ENCODE measurements at regions of chr16 and their contacts with region 1.

Region 1: DNA sequence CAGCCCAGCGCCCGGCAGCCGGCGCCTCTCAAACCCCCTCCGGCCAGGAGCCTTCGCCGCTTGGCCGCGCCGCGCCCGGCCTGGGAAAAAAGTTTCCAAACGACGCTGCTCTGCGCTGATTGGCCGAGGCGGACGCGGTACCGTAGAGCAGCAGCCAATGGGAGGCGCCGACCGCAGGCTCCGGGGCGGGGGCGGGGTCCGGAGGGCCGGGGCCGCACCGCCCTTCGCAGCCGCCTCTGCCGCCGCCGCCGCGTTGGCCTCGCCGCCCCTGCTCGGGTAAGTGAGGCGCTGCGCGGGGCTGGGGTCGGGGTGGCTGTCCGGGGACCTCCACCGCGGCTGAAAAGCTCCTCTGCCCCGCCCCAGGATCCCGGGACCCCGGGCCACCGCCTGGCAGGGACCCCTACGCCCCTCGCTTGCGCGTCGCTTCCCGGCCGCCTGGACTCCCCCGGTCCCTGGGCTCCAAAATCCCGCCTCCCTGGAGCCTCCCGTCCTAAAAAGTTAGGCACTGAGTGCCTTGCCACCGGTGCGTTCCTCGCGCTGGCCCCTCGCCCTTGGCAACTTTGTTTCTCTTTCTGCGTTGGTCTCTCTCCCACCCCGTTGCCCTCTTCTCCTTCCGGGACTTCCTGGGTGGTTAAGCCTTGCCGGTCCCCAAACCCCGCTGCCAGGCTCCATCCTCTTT is at the start of gene NDE1:
- DNase-seq: peak; percentile 94 to 96 (median 95)
- ATAC-seq: peak; percentile 95 to 99 (median 98)
- H3K4me3 ChIP-seq: peak within 1 kb of the TSS; percentile 58 to 100 (median 94)
- H3K27ac ChIP-seq: peak within 1 kb of the TSS; percentile 86 to 99 (median 94)
- H3K4me1 ChIP-seq: peaks cover 0 to 42% (median 24%) of the 10 kb centered on the region in 12 donors
- H3K27me3 ChIP-seq: no peaks in the 10 kb centered on the region
- CTCF ChIP-seq: peak in 3 of 12 donors; percentile 6 to 17 (median 9)
- POLR2A ChIP-seq: peak in 1 of 2 donors; percentile 74
- total RNA-seq, gene NDE1: 13.6 to 32.3 (median 20.4) TPM

Region 2: GRCh38 chr16:15672514-15673167 is 22.5 kb after region 1 on chr16:
- intact Hi-C with region 1: loop called in 2 of 10 experiments (anchors 2 kb)
- DNase-seq: peak; percentile 89 to 93 (median 90)
- ATAC-seq: peak; percentile 94 to 98 (median 98)
- H3K4me3 ChIP-seq: peak overlapping the region in 9 of 12 donors; percentile 4 to 41 (median 28)
- H3K27ac ChIP-seq: peak overlapping the region; percentile 72 to 97 (median 88)
- H3K4me1 ChIP-seq: peaks cover 0 to 38% (median 18%) of the 10 kb centered on the region in 12 donors
- H3K27me3 ChIP-seq: no peaks in the 10 kb centered on the region
- CTCF ChIP-seq: no peak
- POLR2A ChIP-seq: peak in 1 of 2 donors; percentile 53

Region 3: GRCh38 chr16:15704545-15704987 is 54.4 kb after region 1 on chr16:
- intact Hi-C with region 1: loop called in 2 of 10 experiments (anchors 2 to 10 kb)
- DNase-seq: peak; percentile 71 to 81 (median 73)
- ATAC-seq: peak; percentile 50 to 90 (median 82)
- H3K4me3 ChIP-seq: no peak overlapping the region
- H3K27ac ChIP-seq: peak overlapping the region in 1 of 12 donors; percentile 38
- H3K4me1 ChIP-seq: peaks cover 0 to 4% (median 0%) of the 10 kb centered on the region in 12 donors
- H3K27me3 ChIP-seq: no peaks in the 10 kb centered on the region
- CTCF ChIP-seq: peak; percentile 68 to 86 (median 80)
- POLR2A ChIP-seq: no peak